ENCODE measurements at regions of chr17 and their contacts with region 1.

Region 1: GRCh38 chr17:14069251-14070021 is at the start of gene COX10:
- DNase-seq: peak; percentile 88 to 89
- ATAC-seq: peak; percentile 99 to 100 (median 99)
- H3K4me3 ChIP-seq: peak within 1 kb of the TSS; percentile 71 to 98 (median 93)
- H3K27ac ChIP-seq: peak within 1 kb of the TSS; percentile 80 to 95 (median 90)
- H3K4me1 ChIP-seq: peaks cover 0 to 37% (median 25%) of the 10 kb centered on the region in 9 donors
- H3K27me3 ChIP-seq: no peaks in the 10 kb centered on the region
- CTCF ChIP-seq: peak in 1 of 9 donors; percentile 13
- total RNA-seq, gene COX10: 40.5 to 73.1 (median 58.6) TPM

Region 2: GRCh38 chr17:14203388-14203787 is 134.0 kb after region 1 on chr17:
- intact Hi-C with region 1: loop called in 5 of 10 experiments (anchors 5 to 10 kb)
- DNase-seq: no peak
- ATAC-seq: no peak
- H3K4me3 ChIP-seq: no peak overlapping the region
- H3K27ac ChIP-seq: peak overlapping the region in 1 of 10 donors; percentile 51
- H3K4me1 ChIP-seq: peaks cover 0 to 81% (median 20%) of the 10 kb centered on the region in 9 donors
- H3K27me3 ChIP-seq: no peaks in the 10 kb centered on the region
- CTCF ChIP-seq: peak in 5 of 9 donors; percentile 16 to 43 (median 30)

Measured in heart right ventricle (tissue), 16 donors.